WTC11 (cell line): ENCODE measurements at regions of chr3 and their contacts with region 1.

Region 1: GRCh38 chr3:50388016-50388719 is 28.8 kb upstream of the TMEM115 start:
- DNase-seq: peak; percentile 66
- ATAC-seq: peak; percentile 84
- H3K4me3 Mint-ChIP-seq: no peak overlapping the region
- H3K27ac Mint-ChIP-seq: no peak overlapping the region
- H3K4me1 Mint-ChIP-seq: no peaks in the 10 kb centered on the region
- H3K27me3 Mint-ChIP-seq: no peaks in the 10 kb centered on the region
- CTCF ChIP-seq: no peak

Region 2: DNA sequence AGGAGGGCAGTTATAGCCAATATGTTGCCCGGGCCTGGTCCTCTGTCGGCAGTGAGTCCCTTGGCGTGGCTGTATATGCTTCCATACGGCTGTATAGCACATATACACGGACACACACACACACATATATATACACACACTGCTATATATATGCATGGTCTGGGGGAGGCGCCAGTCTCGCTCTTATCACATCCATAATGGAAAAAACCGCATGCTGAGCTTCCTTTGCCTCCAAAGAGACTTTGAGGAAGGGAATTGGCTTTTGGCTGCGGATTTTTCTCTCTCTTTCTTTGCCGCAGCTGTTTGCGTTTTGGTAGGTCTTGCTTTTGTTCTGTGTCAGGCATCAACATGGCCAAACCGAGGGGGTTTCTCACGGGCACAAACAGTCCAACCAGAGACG is 17.6 kb before region 1 on chr3:
- CTCF ChIA-PET with region 1: interaction called, 13 read pairs
- POLR2A ChIA-PET with region 1: no interaction called
- DNase-seq: no peak
- ATAC-seq: no peak
- H3K4me3 Mint-ChIP-seq: no peak overlapping the region
- H3K27ac Mint-ChIP-seq: peak overlapping the region; percentile 77; the same call in 1 of the 2 replicates
- H3K4me1 Mint-ChIP-seq: peaks cover 30% of the 10 kb centered on the region
- H3K27me3 Mint-ChIP-seq: peaks cover 5% of the 10 kb centered on the region; the same call in 1 of the 2 replicates
- CTCF ChIP-seq: no peak

Region 3: GRCh38 chr3:50415066-50415465 is 26.9 kb after region 1 on chr3:
- CTCF ChIA-PET with region 1: interaction called, 15 read pairs
- POLR2A ChIA-PET with region 1: no interaction called
- DNase-seq: peak; percentile 53
- ATAC-seq: peak; percentile 83
- H3K4me3 Mint-ChIP-seq: no peak overlapping the region
- H3K27ac Mint-ChIP-seq: no peak overlapping the region
- H3K4me1 Mint-ChIP-seq: peaks cover 14% of the 10 kb centered on the region
- H3K27me3 Mint-ChIP-seq: no peaks in the 10 kb centered on the region
- CTCF ChIP-seq: peak; percentile 43